ENCODE measurements at regions of chr7 and their contacts with region 1.

Region 1: GRCh38 chr7:112206238-112207044 is at the starts of genes DOCK4 and ZNF277:
- DNase-seq: peak; percentile 100
- ATAC-seq: peak; percentile 97
- total RNA-seq, gene DOCK4: 16.8 TPM
- total RNA-seq, gene ZNF277: 15.7 TPM

Region 2: DNA sequence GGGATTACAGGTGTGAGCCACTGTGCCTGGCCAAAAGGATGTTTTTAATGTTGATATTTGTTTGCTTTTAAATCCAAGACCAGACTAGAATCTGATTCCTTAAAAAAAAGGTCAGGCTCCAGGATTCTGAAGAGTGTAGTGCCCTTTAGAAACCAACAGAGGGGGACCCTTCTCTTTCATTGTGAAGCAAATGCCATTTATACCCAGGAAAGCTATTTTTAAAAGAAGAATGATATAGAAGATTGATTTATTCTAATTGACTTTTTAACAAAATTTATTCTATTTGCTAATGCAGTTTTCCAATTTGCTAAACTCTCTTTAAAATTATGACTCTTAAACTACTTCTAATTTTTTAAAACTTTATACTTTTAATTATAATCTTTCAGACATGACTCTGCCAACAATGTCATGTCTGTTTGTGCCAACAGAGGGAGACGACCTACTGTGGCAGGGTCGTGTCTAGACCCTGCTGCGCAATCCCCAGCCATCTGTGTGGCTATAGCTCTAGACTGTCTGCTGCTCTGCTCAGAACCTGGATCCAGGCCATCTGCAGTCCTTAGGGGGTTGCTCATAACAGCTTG is 443.1 kb before region 1 on chr7:
- intact Hi-C with region 1: loop called (anchors 10 kb)
- DNase-seq: no peak
- ATAC-seq: peak; percentile 57

Region 3: DNA sequence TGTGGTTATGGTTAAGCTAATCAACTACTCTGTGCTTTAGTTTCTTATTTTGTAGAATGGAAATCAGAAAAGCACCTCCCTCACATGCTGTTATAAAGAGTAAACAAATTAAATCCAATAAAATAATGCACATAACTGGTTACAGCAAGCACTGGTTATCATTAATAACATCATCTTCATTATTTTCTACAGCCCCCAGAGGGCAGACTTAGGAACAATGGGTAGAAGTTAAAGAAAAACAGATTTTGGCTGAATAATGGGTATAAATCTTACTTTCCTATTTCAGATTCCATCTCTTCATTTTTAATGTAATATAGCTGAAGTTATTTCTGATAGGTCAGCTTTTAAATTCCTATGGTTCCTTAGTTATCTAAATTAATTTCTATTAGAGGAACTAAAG is 126.8 kb before region 1 on chr7:
- intact Hi-C with region 1: loop called (anchors 5 kb)
- DNase-seq: no peak
- ATAC-seq: no peak

Region 4: GRCh38 chr7:112162142-112163020 is 44.1 kb before region 1 on chr7:
- intact Hi-C with region 1: loop called (anchors 5 kb)
- DNase-seq: no peak
- ATAC-seq: peak; percentile 91

Region 5: DNA sequence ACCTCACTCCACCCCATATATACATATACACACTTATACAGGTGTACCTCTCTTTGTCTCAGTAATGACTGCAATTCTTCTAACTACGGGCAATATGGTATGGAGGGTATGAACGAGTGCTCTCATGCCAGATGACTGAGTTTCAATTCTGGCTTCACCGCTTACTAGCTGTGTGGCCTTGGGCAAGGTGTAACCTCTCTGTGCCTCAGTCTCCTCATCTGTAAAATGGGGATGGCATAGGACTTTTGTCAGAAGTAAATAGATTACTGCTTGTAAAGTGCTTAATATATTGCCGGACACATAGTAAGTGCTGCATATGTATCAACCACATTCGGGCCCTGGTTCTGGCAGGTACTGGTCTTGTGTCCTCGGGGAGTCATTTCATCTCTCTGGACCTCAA is 183.7 kb after region 1 on chr7:
- intact Hi-C with region 1: loop called (anchors 2 kb)
- DNase-seq: no peak
- ATAC-seq: no peak

Measured in Right ventricle myocardium inferior (tissue), 1 donor.